Adrenal gland (tissue), 19 donors: ENCODE measurements at regions of chr21 and their contacts with region 1.

Region 1: DNA sequence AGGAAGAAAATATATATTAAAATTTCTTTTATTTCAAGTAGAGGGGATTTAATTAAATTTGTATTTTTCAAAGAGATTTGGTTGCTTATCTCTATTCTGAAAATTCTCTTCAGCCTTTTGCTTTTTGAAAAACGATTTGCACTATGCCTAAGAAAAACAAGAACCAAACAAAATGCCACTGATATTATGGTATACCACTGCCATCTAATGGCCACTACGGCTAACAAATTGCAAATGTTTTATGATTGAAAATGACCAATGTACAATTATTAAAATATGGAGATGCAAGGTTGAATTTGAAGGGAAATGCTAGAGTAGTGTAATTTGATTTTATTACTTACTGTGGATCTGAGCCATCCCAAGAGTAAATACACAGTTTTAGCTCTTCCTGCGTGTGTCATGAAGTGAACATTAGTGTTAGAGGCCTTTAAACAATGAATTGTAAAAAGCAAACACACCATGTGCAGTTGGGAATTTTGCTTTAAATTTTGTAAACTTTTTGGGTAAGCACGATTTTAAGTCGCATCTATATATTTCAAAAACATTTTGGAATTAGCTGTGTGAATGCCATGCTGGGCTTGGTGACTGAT is 137.4 kb upstream of the USP25 start:
- DNase-seq: peak in 1 of 7 donors; percentile 16
- H3K4me3 ChIP-seq: no peak overlapping the region
- H3K27ac ChIP-seq: no peak overlapping the region
- H3K4me1 ChIP-seq: no peaks in the 10 kb centered on the region
- H3K27me3 ChIP-seq: no peaks in the 10 kb centered on the region
- CTCF ChIP-seq: peak; percentile 39 to 77 (median 67)
- POLR2A ChIP-seq: no peak

Region 2: DNA sequence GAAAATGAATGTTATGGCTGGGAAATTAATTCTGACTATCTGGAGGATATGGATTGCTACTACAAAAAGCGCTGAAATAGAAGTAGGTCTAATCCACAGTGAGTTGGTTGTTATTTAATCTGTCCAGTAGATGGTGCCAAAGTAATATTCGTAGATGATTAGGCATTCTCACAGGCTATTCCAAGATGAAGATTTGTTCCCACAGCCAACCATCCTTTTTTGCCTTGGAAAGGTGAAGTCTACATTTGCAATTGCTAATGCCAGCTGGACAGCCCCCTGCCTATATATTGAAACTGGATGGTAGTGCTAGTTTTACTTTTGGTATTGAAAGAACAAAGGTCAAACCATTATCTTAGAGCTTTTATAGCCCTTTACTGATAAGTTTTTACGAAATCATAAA is 1332.6 kb before region 1 on chr21:
- intact Hi-C with region 1: loop called in 1 of 2 experiments (anchors 10 kb)
- DNase-seq: no peak
- H3K4me3 ChIP-seq: no peak overlapping the region
- H3K27ac ChIP-seq: no peak overlapping the region
- H3K4me1 ChIP-seq: no peaks in the 10 kb centered on the region
- H3K27me3 ChIP-seq: peaks cover 6% of the 10 kb centered on the region
- CTCF ChIP-seq: peak; percentile 33 to 67 (median 58)
- POLR2A ChIP-seq: no peak

Region 3: DNA sequence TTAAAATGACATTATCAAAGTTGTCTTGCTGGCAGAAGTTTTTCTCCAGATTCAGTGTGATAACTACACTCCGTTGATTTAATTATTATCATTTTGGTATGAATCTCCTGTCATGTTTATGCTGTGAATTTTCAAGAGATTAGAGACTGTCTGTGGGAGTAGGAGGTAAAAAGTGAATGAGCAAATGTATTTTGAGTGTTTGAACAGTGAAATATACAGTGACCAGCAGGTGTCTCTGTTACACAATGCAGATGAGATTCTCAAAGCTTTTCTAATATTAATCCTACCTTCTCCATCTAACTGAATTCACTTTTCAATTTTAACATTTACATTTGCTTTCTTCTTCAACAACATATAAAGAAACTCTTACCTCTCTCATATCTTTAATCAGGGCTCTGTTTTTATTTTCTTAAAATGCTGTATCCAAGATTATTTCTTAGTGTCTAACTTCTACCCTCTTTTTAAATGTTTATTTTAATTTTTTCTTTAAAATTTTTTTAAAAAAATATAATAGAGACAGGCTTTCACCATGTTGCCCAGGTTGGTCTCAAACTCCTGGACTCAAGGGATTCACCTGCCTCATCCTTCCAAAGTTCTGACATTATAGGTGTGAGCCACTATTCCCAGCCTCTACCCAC is 1188.6 kb before region 1 on chr21:
- intact Hi-C with region 1: loop called in 1 of 2 experiments (anchors 10 kb)
- DNase-seq: no peak
- H3K4me3 ChIP-seq: no peak overlapping the region
- H3K27ac ChIP-seq: no peak overlapping the region
- H3K4me1 ChIP-seq: no peaks in the 10 kb centered on the region
- H3K27me3 ChIP-seq: no peaks in the 10 kb centered on the region
- CTCF ChIP-seq: peak; percentile 33 to 68 (median 56)
- POLR2A ChIP-seq: no peak

Region 4: DNA sequence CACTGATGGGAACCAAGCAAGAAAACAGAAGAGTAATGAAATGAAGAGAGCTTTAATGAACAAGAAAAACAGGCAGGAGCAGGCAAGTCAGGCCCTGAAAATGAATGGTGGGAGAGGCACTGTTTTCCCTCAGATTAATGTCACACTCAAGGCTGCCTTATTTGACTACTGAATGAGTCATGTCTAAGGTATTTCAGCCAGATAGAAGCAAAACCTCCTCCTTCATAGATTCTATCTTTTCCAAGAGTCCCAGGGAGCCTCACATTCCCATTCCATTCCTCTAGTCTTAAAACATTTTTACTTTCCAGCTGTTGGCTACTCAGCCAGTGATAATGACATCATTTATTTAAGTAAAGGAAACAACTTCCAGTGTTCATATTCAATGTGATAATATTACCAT is 299.1 kb before region 1 on chr21:
- intact Hi-C with region 1: no loop called
- DNase-seq: peak in 4 of 7 donors; percentile 30 to 58 (median 42)
- H3K4me3 ChIP-seq: no peak overlapping the region
- H3K27ac ChIP-seq: peak overlapping the region in 1 of 5 donors; percentile 23
- H3K4me1 ChIP-seq: peaks cover 6% of the 10 kb centered on the region in 2 donors
- H3K27me3 ChIP-seq: no peaks in the 10 kb centered on the region
- CTCF ChIP-seq: no peak
- POLR2A ChIP-seq: peak in 1 of 2 donors; percentile 19